PC-9 (cell line): ENCODE measurements at regions of chr1 and their contacts with region 1.

Region 1: DNA sequence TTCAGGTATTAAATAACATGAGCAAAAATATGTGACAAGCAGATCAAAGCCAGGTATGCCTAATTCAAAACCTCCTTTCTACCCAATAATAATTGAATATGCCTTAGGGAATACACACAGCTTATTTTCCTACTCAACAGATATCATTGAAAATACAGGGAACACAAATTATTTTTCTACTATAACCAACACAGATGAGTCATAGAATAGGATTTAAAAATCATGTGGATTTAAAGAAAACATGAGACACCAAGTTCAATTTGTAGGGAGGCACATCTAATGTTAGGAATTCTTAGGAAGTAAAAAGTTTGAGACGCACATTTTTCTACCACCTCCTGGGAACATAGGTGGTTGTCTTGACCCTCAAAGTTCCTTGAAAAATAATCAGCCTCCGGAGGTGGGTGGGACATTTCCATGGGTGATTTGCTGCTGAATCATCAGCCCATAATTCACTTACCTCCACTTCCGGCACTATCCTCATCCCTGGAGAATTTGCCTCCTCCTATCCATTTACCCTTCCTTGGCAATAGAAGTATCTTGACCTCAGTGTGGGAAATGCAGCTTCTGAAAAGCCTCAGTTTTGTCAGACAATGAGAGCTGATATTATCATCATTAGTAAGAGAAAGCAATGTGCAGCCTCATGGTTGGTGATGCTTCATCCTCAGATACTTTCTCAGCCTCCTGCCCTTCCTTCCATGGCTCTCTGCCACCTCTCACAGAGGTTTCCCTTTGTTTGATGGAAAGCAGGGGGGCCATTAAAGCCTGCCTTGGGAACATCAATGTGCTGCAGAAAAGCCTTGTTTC is 33.5 kb upstream of the RGS4 start:
- DNase-seq: peak; percentile 64 to 73
- H3K4me3 ChIP-seq: peak overlapping the region; percentile 4; the same call in 1 of the 2 replicates
- H3K27ac ChIP-seq: peak overlapping the region; percentile 92
- H3K4me1 ChIP-seq: peaks cover 23% of the 10 kb centered on the region
- H3K27me3 ChIP-seq: no peaks in the 10 kb centered on the region
- CTCF ChIP-seq: no peak

Region 2: GRCh38 chr1:162854245-162854882 is 181.3 kb before region 1 on chr1:
- CTCF ChIA-PET with region 1: no interaction called
- POLR2A ChIA-PET with region 1: no interaction called
- intact Hi-C with region 1: loop called (anchors 1 kb)
- DNase-seq: peak; percentile 60 to 68
- H3K4me3 ChIP-seq: no peak overlapping the region
- H3K27ac ChIP-seq: no peak overlapping the region
- H3K4me1 ChIP-seq: peaks cover 28% of the 10 kb centered on the region
- H3K27me3 ChIP-seq: no peaks in the 10 kb centered on the region
- CTCF ChIP-seq: peak; percentile 82

Region 3: DNA sequence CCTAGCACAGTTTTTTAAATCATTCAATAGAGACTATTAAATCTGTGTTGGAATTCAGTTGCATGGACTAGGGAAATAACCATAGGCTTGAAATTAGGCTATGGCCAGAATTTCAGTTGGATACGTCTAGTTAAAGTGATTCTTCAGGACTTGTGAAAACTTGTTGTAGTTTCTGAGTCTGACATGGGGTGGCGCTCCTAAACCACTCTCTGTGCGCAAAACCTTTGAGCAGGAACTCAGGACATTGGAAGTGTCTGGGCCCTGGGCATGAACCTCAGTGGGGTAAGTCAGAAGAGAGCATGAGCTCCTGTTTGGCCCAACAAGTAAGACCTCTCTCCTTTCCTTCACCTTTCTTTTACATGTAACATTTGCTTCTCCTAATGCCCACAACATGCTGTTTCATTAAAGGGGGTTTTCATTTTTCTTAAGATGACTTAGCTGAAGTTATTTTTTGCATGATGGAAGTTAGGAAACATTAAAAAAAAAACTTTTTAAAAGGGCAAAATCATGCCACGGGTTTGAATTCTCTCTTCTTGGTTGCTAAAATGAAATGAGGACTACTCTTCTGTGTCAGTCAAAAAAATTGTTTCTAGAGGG is 157.6 kb before region 1 on chr1:
- CTCF ChIA-PET with region 1: no interaction called
- POLR2A ChIA-PET with region 1: no interaction called
- intact Hi-C with region 1: loop called (anchors 2 kb)
- DNase-seq: peak in 1 of 2 experiments; percentile 47
- H3K4me3 ChIP-seq: no peak overlapping the region
- H3K27ac ChIP-seq: no peak overlapping the region
- H3K4me1 ChIP-seq: no peaks in the 10 kb centered on the region
- H3K27me3 ChIP-seq: no peaks in the 10 kb centered on the region
- CTCF ChIP-seq: peak; percentile 89

Region 4: DNA sequence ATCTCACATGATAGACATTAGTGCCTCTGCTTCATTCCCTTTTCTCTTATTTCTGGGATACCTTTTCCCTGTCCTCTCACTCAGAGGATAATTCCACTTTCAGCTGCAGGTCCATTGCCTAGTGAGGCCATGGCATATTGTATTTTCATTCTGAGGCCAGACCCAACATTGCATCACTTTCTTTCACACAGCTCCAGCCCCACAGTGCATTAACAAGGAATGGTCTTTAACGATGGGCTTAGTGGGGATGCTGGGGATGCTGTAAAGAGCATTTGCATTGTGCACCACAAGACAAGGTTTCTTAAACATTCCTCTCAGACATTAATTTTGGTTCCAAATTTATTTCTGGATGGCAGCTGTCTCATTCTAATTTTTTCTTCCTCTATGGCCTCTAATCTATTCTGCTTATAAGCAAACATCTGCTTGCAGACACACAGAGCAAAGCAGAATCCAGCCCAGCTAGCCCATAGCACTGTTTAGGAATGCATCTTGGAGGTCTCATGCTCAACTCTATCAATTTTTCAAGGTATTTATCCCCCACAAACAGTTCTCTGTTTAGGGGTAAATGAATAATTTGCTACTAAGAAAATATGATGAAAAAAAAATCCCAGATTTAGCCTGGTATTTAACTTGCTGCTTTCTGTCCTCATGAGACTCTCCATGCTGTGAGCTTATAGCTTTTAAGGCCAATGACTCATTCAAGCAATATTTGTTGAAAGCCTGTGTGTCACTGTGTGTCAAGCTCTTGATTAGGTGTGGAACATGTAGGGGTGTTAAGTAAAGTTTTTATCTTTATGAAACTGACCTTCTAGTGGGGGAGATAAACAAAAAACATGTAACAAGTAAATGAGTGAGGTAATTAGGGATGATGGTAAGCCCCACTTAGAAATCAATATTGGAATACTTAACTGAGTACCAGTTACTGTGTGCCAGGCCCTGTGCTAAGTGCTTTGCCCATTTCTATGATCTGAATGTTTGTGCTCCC is 130.2 kb before region 1 on chr1:
- CTCF ChIA-PET with region 1: no interaction called
- POLR2A ChIA-PET with region 1: no interaction called
- intact Hi-C with region 1: loop called (anchors 5 kb)
- DNase-seq: peak in 1 of 2 experiments; percentile 77
- H3K4me3 ChIP-seq: no peak overlapping the region
- H3K27ac ChIP-seq: 0 out of 2 replicates have a peak overlapping the region, but pooled peaks have one; percentile 5
- H3K4me1 ChIP-seq: peaks cover 25% of the 10 kb centered on the region
- H3K27me3 ChIP-seq: no peaks in the 10 kb centered on the region
- CTCF ChIP-seq: no peak

Region 5: GRCh38 chr1:162973381-162973795 is 62.3 kb before region 1 on chr1:
- CTCF ChIA-PET with region 1: no interaction called
- POLR2A ChIA-PET with region 1: no interaction called
- intact Hi-C with region 1: no loop called
- DNase-seq: no peak
- H3K4me3 ChIP-seq: no peak overlapping the region
- H3K27ac ChIP-seq: no peak overlapping the region
- H3K4me1 ChIP-seq: peaks cover 13% of the 10 kb centered on the region
- H3K27me3 ChIP-seq: no peaks in the 10 kb centered on the region
- CTCF ChIP-seq: no peak

Region 6: DNA sequence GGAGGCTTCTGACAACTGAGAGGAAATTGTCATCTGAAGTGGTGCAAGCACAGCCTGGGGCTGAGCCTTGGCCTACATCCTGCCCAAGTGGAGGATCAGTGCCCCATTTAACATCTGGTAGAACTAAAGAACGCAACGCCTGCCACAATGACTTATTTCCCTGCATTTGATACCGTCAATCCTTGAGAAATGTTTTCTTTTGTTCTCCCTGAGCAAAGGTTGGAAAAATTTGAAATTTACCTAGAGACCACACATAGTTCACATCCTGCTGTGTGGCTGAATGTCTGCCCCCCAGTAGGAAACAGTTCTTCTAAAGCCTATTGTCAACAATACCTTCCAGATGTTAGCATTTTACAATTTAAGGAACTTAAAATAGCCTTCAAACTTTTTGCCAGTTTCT is 28.0 kb after region 1 on chr1:
- CTCF ChIA-PET with region 1: no interaction called
- POLR2A ChIA-PET with region 1: no interaction called
- intact Hi-C with region 1: no loop called
- DNase-seq: no peak
- H3K4me3 ChIP-seq: no peak overlapping the region
- H3K27ac ChIP-seq: no peak overlapping the region
- H3K4me1 ChIP-seq: no peaks in the 10 kb centered on the region
- H3K27me3 ChIP-seq: no peaks in the 10 kb centered on the region
- CTCF ChIP-seq: no peak

Region 7: GRCh38 chr1:163168053-163168452 is 132.4 kb after region 1 on chr1:
- CTCF ChIA-PET with region 1: no interaction called
- POLR2A ChIA-PET with region 1: no interaction called
- intact Hi-C with region 1: loop called (anchors 2 kb)
- DNase-seq: peak; percentile 28 to 47
- H3K4me3 ChIP-seq: no peak overlapping the region
- H3K27ac ChIP-seq: no peak overlapping the region
- H3K4me1 ChIP-seq: no peaks in the 10 kb centered on the region
- H3K27me3 ChIP-seq: no peaks in the 10 kb centered on the region
- CTCF ChIP-seq: no peak

Region 8: GRCh38 chr1:164423136-164423535 is 1387.5 kb after region 1 on chr1:
- CTCF ChIA-PET with region 1: no interaction called
- POLR2A ChIA-PET with region 1: interaction called, 13 read pairs
- intact Hi-C with region 1: no loop called
- DNase-seq: no peak
- H3K4me3 ChIP-seq: no peak overlapping the region
- H3K27ac ChIP-seq: no peak overlapping the region
- H3K4me1 ChIP-seq: no peaks in the 10 kb centered on the region
- H3K27me3 ChIP-seq: no peaks in the 10 kb centered on the region
- CTCF ChIP-seq: no peak